Heart right ventricle (tissue), 16 donors: ENCODE measurements at regions of chr7 and their contacts with region 1.

Region 1: GRCh38 chr7:66330961-66331360 is 125.8 kb downstream of the TPST1 start:
- DNase-seq: peak; percentile 39 to 80
- ATAC-seq: peak; percentile 50 to 97 (median 93)
- H3K4me3 ChIP-seq: no peak overlapping the region
- H3K27ac ChIP-seq: peak overlapping the region in 2 of 10 donors; percentile 1 to 41
- H3K4me1 ChIP-seq: peaks cover 0 to 23% (median 13%) of the 10 kb centered on the region in 9 donors
- H3K27me3 ChIP-seq: no peaks in the 10 kb centered on the region
- CTCF ChIP-seq: no peak

Region 2: GRCh38 chr7:66250711-66251110 is 80.2 kb before region 1 on chr7:
- intact Hi-C with region 1: no loop called
- DNase-seq: no peak
- ATAC-seq: no peak
- H3K4me3 ChIP-seq: no peak overlapping the region
- H3K27ac ChIP-seq: no peak overlapping the region
- H3K4me1 ChIP-seq: peaks cover 0 to 7% (median 0%) of the 10 kb centered on the region in 9 donors
- H3K27me3 ChIP-seq: no peaks in the 10 kb centered on the region
- CTCF ChIP-seq: no peak

Region 3: DNA sequence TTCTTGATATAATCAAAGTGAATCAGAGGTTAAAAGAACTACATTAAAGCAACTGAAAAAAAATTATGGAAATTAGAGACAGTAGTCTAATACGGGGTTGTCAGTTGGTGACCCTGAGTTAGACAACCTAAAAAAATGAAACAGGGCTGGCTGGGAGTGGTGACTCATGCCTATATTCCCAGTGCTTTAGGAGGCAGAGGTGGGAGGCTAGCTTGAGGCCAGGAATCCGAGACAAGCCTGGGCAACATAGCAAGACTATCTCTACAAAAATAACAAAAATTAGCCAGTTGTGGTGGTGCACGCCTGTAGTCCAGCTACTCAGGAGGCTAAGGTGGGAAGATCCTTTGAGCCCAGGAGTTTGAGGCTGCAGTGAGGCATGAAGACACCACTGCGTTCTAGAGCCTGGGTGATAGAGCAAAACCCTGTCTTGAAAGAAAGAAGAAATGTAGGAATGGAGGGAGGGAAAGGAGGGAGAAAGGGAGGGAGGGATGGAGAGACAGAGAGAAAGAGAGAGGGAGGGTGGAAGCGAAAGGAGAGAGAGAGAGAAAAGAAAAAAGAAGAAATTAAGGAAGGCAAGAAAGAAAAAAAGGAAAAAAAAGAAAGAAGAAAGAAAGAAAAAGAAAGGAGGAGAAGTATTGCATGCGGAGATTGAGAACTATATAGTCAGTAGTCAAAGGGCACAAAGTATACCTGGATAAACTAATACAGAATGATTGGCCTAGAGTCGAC is 40.3 kb after region 1 on chr7:
- intact Hi-C with region 1: loop called in 1 of 10 experiments (anchors 2 kb)
- DNase-seq: no peak
- ATAC-seq: no peak
- H3K4me3 ChIP-seq: no peak overlapping the region
- H3K27ac ChIP-seq: no peak overlapping the region
- H3K4me1 ChIP-seq: no peaks in the 10 kb centered on the region
- H3K27me3 ChIP-seq: no peaks in the 10 kb centered on the region
- CTCF ChIP-seq: no peak